CD4-positive, alpha-beta memory T cell (primary cell): ENCODE measurements at regions of chr3 and their contacts with region 1.

Region 1: DNA sequence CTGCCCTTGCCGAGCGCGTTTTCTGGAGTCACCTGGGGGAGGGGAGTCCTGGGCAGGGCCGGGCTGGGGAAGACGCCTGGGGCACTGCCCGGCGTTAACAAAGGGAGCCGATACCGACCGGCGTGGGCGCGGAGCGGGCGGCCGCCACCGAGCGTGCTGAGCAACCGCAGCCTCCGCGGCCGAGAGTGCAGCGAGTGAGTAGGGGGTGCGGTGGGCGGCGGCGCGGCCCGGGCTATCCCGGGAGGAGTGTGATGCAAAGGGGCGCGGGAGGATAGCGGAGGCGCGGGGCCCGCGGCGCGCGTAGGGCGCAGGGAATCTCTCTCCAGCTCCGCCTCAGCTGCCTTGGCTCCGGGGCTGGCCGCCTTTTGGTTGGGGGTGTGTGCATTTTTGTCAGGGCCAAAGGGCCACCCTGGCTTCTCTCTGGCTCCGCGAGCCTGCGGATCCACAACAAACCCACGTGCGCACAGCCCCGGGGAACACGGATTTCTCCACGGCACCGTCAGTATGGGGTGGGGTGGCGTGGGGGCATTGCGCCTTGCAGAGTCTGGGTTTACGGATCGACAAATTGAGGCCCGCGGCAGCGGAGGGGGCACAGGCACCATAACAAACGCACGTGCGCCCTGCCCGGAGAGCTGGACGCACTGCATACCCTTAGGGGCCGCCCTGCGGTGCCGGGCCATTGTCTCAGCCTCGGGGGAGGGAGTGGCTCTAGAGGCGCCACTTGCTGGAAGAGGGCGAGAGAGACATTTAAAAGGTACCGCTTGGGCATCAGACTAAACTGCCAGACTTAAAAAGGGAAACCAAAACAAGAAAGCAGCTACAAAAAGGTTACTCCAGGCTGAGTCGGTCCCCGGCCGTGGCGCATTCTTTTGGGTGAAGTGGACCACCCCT is 560 bp downstream of the ST6GAL1 start:
- DNase-seq: peak; percentile 74 to 84 (median 78)
- H3K4me3 ChIP-seq: peak overlapping the region; percentile 85 to 92
- H3K4me3 Mint-ChIP-seq: peak overlapping the region; percentile 91 to 100 (median 99)
- H3K27ac ChIP-seq: peak overlapping the region; percentile 81
- H3K27ac Mint-ChIP-seq: peak overlapping the region; percentile 90 to 98 (median 96)
- H3K4me1 ChIP-seq: peaks cover 37% of the 10 kb centered on the region
- H3K4me1 Mint-ChIP-seq: peaks cover 22 to 58% (median 39%) of the 10 kb centered on the region in 4 donors
- H3K27me3 ChIP-seq: no peaks in the 10 kb centered on the region
- H3K27me3 Mint-ChIP-seq: no peaks in the 10 kb centered on the region

Region 2: DNA sequence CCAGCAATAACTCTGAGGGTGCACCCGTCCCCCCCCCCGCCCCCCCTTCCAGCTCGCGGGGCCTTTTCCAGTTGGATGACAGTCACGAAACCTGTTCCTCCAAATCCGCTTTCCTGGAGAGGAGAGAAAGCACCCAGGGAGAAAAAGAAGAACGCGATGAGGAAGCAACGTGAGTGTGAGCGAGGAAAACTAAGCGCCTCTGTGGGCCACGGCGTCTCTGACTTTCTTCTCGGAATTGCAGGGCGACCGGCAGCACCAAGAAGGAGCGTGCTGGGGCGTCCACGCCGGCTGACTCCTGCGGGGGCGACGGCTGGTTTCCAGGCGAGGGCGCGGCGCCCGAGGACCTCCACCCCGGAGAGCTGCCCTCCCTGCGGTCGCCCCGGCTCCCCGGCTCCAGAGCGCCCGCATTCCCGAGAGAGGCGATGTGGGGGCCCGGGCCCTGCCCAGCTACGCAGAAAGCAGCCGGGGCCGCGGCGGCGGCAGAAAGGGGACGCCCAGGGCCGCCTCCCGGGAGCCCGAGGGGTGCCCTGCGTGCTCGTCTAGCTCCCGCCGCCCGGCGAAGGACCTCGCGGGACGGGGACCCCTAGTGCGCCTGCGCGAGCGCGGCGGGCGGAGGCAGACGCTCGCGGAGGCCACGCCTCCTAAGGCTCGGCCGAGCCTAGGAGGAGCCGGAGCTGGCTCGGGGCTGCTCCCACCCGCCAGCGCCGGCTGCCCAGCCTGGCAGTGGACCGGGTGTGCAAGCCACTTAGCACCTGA is 103.7 kb before region 1 on chr3:
- CTCF ChIA-PET with region 1: interaction called, 8 read pairs
- POLR2A ChIA-PET with region 1: interaction called, 14 read pairs
- intact Hi-C with region 1: no loop called
- DNase-seq: peak; percentile 81 to 89 (median 87)
- H3K4me3 ChIP-seq: peak overlapping the region in 1 of 2 donors; percentile 65
- H3K4me3 Mint-ChIP-seq: peak overlapping the region; percentile 65 to 93 (median 78)
- H3K27ac ChIP-seq: peak overlapping the region; percentile 47
- H3K27ac Mint-ChIP-seq: peak overlapping the region in 2 of 7 donors; percentile 18 to 28
- H3K4me1 ChIP-seq: peaks cover 25% of the 10 kb centered on the region
- H3K4me1 Mint-ChIP-seq: peaks cover 5 to 16% (median 12%) of the 10 kb centered on the region in 4 donors
- H3K27me3 ChIP-seq: peaks cover 21% of the 10 kb centered on the region
- H3K27me3 Mint-ChIP-seq: peaks cover 30 to 38% of the 10 kb centered on the region in 2 donors

Region 3: GRCh38 chr3:186882881-186883685 is 47.8 kb before region 1 on chr3:
- CTCF ChIA-PET with region 1: interaction called, 6 read pairs
- POLR2A ChIA-PET with region 1: interaction called, 36 read pairs
- intact Hi-C with region 1: loop called (anchors 2 kb)
- DNase-seq: no peak
- H3K4me3 ChIP-seq: no peak overlapping the region
- H3K4me3 Mint-ChIP-seq: peak overlapping the region in 6 of 8 donors; percentile 17 to 77 (median 39)
- H3K27ac ChIP-seq: no peak overlapping the region
- H3K27ac Mint-ChIP-seq: peak overlapping the region in 5 of 7 donors; percentile 11 to 26 (median 17)
- H3K4me1 ChIP-seq: peaks cover 45% of the 10 kb centered on the region
- H3K4me1 Mint-ChIP-seq: peaks cover 30 to 55% (median 40%) of the 10 kb centered on the region in 4 donors
- H3K27me3 ChIP-seq: no peaks in the 10 kb centered on the region
- H3K27me3 Mint-ChIP-seq: no peaks in the 10 kb centered on the region

Region 4: GRCh38 chr3:186940967-186941366 is 10.1 kb after region 1 on chr3:
- CTCF ChIA-PET with region 1: interaction called, 4 read pairs
- POLR2A ChIA-PET with region 1: interaction called, 11 read pairs
- intact Hi-C with region 1: no loop called
- DNase-seq: no peak
- H3K4me3 ChIP-seq: no peak overlapping the region
- H3K4me3 Mint-ChIP-seq: no peak overlapping the region
- H3K27ac ChIP-seq: no peak overlapping the region
- H3K27ac Mint-ChIP-seq: peak overlapping the region in 3 of 7 donors; percentile 29 to 53 (median 44)
- H3K4me1 ChIP-seq: peaks cover 38% of the 10 kb centered on the region
- H3K4me1 Mint-ChIP-seq: peaks cover 43 to 76% (median 60%) of the 10 kb centered on the region in 4 donors
- H3K27me3 ChIP-seq: no peaks in the 10 kb centered on the region
- H3K27me3 Mint-ChIP-seq: no peaks in the 10 kb centered on the region

Region 5: GRCh38 chr3:187031934-187032333 is 101.0 kb after region 1 on chr3:
- CTCF ChIA-PET with region 1: interaction called, 20 read pairs
- POLR2A ChIA-PET with region 1: interaction called, 83 read pairs
- intact Hi-C with region 1: loop called (anchors 1 kb)
- DNase-seq: no peak
- H3K4me3 ChIP-seq: no peak overlapping the region
- H3K4me3 Mint-ChIP-seq: peak overlapping the region; percentile 37 to 97 (median 74)
- H3K27ac ChIP-seq: peak overlapping the region; percentile 31
- H3K27ac Mint-ChIP-seq: peak overlapping the region; percentile 71 to 95 (median 85)
- H3K4me1 ChIP-seq: peaks cover 69% of the 10 kb centered on the region
- H3K4me1 Mint-ChIP-seq: peaks cover 56 to 85% (median 69%) of the 10 kb centered on the region in 4 donors
- H3K27me3 ChIP-seq: no peaks in the 10 kb centered on the region
- H3K27me3 Mint-ChIP-seq: no peaks in the 10 kb centered on the region

Region 6: GRCh38 chr3:187112934-187113793 is 182.3 kb after region 1 on chr3:
- CTCF ChIA-PET with region 1: interaction called, 12 read pairs
- POLR2A ChIA-PET with region 1: interaction called, 3 read pairs
- intact Hi-C with region 1: no loop called
- DNase-seq: peak in 4 of 5 donors; percentile 45 to 54 (median 52)
- H3K4me3 ChIP-seq: no peak overlapping the region
- H3K4me3 Mint-ChIP-seq: no peak overlapping the region
- H3K27ac ChIP-seq: no peak overlapping the region
- H3K27ac Mint-ChIP-seq: no peak overlapping the region
- H3K4me1 ChIP-seq: peaks cover 4% of the 10 kb centered on the region
- H3K4me1 Mint-ChIP-seq: peaks cover 5 to 7% (median 6%) of the 10 kb centered on the region in 4 donors
- H3K27me3 ChIP-seq: no peaks in the 10 kb centered on the region
- H3K27me3 Mint-ChIP-seq: no peaks in the 10 kb centered on the region